Cardiac septum (tissue), 1 donor: ENCODE measurements at regions of chr7 and their contacts with region 1.

Region 1: DNA sequence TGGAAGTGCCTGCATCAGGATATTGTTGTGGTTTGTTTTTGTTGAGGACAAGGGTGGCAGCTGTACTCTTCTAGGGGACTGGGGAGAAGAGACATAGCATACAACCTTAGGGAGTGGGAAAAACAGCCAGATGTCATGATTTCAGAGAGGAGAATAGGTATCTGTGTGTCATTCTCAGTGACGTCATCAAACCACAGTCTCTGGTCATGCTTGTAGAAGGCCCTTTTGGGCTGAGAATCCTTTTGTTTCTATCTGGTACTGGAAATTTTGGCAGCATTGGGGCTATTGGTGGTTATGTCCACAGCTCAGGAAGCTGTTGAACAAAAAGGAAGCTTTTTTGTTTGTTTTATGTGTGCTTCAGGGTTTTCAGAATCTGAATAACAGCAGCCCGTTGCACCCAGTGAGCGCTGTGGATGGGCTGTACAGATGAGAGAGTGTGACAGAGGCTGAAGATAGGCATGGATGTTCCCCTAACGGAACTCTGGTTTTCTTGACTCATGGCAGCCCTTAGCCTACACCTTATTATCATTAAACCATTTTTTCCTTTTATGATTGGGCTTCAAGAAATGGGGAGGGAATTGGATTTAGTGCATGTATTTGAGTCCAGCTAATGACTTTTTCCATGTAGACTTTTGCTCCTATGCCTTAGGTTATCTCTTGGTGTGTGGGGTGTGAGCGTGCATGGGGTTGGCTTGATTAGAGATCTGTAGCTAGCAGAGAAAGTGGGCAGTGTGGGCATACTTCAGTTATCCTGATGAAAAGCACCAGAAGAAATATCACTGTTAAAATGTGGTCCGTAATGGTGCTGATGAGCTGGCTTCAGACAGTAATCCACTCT is 65.7 kb downstream of the SND1 start:
- DNase-seq: no peak

Region 2: DNA sequence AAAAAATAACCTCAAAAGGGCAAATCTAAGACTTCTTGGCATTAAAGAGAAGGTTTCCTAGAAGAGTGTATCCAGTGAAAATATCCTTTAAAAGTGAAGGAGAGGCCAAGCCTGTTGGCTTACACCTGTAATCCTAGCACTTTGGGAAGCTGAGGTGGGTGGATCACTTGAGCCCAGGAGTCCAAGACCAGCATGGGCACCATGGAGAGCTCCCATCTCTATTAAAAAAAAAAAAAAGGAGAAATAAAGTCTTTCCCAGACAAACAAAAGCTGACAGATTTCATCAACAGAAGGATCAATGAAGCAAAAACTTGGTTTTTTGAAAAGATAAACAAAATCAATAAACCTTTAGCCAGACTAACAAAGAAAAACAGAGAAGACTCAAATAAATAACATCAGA is 257.6 kb before region 1 on chr7:
- intact Hi-C with region 1: no loop called
- DNase-seq: no peak

Region 3: GRCh38 chr7:127938588-127938987 is 220.9 kb after region 1 on chr7:
- intact Hi-C with region 1: loop called (anchors 10 kb)
- DNase-seq: no peak

Region 4: DNA sequence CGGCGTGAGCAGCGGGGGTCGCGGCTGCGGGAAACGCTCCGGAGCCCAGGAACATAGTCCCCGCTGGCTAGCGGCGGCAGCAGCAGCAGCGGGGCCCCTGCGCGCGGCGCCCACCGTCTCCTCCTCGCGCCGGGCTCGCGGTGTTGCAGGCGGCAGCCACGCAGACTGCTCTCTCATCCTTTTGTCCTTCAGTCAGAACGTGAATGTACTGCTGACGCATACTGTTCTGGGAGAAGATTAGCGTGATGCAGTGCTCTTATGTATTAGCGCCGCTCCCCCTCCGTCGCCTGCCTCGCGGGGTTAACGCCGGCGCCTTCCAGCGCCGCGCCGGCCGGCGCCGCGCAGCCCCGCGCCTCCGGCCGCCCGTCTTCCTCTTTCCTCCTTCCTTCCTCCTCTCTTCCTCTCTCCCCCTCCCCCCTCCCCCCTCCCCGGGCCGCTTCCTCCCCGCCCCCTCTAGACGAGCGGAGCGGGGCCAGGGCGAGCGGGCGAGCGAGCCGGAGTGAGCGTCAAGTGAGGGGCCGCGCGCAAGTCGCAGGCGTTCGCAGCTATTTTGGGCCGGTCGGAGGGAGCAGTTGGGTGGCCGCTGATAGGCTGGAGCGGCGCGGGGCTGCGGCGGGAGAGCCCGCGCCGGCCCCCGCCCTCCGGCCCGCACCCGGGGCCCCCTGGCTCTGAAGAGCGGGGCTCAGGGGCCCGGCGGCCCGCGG is 314.3 kb after region 1 on chr7:
- intact Hi-C with region 1: loop called (anchors 5 kb)
- DNase-seq: peak; percentile 81